Left colon (tissue), 2 donors: ENCODE measurements at regions of chr4 and their contacts with region 1.

Region 1: GRCh38 chr4:15956179-15956850 is 6.7 kb downstream of the FGFBP2 start:
- DNase-seq: peak; percentile 86 to 95
- ATAC-seq: peak; percentile 99

Region 2: GRCh38 chr4:15479089-15479912 is 477.0 kb before region 1 on chr4:
- intact Hi-C with region 1: loop called in 1 of 2 experiments (anchors 10 kb)
- DNase-seq: peak; percentile 8 to 32
- ATAC-seq: peak; percentile 70

Region 3: DNA sequence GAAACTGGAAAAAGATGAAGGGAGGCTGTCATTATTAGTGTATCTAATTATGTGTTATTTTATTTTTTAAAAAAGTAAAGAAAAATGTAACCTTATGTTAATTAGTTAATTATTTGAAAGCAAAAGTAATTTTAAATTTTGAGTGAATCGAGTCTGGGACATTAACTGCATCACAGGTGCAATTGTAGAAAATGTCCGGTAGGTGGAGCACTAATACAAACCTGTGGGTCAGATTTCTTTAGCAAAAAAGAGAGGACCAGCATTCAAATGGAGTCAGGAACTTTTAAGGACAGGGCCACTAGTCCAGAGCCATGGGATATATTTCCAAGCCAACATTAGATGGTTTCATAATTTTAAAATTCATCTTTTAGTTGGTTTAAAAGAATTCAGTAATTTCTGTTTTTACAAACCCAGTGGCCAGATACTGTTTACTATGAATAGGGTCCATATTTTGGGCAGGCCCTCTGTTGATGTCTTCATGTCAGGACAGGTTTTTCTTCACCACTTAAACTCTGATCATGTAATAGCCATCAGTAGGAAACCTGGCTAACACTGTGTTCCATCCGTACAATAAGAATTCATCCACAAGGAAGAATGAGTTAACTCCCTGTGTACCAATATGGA is 226.3 kb before region 1 on chr4:
- intact Hi-C with region 1: loop called in 1 of 2 experiments (anchors 5 kb)
- DNase-seq: no peak
- ATAC-seq: peak; percentile 49

Region 4: GRCh38 chr4:15882675-15883086 is 73.6 kb before region 1 on chr4:
- intact Hi-C with region 1: loop called in 1 of 2 experiments (anchors 10 kb)
- DNase-seq: peak; percentile 40 to 55
- ATAC-seq: peak; percentile 87

Region 5: DNA sequence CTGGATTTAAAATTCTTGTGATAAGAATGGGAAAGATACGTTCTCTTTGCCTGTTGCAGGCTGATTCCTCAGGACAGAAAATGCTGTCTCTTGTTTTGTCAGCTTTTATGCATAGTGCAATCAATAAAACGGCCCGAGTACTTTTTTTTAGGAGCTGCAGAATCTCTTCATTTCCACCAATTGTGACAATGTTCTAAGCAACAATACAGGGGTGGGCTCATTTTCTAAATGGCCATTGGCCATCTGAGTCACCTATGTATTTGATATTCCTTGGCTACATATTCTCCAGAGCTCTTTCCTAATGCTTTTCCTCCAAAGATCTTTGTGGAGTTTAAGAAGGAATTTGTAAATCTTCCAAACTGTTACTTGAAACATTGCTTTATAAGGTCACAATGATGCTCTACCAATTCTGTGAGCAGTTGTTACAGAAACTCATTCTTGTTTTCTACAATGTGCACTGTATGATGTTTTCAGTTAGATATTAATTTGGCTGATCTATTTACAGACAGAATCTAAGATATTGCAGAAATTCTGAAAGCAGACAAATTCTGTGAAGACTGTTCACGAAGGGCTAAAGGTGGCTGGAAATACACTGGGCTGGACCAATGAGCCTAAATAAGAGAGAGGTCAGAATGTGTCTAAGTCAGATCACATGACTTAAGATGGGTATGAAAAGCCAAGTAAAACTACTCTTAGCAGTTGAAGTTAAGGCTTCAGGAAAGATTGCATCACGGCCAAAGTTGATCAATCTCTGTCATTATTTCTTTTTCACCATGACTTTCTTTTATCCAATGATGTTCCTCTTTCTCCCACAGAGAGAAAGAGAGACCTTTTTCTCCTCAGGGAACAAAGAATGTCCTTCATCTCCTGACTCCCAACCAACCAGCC is 236.6 kb after region 1 on chr4:
- intact Hi-C with region 1: no loop called
- DNase-seq: no peak
- ATAC-seq: no peak